ENCODE measurements at regions of chr22 and their contacts with region 1.

Region 1: DNA sequence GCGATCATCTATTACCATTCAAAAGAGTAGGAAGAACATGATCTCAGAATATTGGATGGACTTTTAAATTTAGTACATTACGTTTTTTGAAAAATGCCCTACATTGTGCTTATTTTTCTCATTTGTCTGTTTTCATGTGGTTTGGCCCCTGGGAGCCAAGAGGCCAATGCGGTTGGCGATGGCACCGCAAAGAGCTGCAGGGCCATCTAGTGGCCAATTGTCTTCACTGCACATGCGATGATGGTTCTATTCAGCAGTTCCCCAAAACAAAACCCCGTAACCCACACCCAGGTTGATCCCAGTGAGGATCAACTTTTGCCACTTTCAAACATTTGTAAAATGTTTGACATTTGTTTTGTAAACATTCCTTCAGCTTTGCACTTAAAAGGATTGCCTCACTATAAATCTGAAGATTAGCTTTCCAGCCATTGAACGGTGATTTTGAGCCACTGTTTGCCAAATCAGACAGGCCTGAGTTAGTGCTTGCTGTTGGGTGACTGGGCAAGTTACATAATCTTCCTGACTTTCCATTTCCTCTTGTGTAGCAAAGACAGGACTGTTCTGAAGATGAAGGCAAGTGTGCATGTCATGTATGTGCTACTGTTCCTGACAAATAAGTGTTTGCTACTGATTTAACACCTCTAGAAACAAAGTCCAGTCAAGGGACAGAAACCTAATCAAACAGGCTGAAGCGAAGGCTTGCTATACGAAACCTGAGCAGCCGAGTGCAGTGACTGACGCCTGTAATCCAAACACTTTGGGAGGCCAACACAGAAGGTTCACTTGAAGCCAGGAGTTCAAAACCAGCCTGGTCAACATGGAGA is 29.2 kb upstream of the XBP1 start:
- DNase-seq: peak; percentile 7
- H3K4me3 ChIP-seq: no peak overlapping the region
- CTCF ChIP-seq: peak; percentile 89

Region 2: DNA sequence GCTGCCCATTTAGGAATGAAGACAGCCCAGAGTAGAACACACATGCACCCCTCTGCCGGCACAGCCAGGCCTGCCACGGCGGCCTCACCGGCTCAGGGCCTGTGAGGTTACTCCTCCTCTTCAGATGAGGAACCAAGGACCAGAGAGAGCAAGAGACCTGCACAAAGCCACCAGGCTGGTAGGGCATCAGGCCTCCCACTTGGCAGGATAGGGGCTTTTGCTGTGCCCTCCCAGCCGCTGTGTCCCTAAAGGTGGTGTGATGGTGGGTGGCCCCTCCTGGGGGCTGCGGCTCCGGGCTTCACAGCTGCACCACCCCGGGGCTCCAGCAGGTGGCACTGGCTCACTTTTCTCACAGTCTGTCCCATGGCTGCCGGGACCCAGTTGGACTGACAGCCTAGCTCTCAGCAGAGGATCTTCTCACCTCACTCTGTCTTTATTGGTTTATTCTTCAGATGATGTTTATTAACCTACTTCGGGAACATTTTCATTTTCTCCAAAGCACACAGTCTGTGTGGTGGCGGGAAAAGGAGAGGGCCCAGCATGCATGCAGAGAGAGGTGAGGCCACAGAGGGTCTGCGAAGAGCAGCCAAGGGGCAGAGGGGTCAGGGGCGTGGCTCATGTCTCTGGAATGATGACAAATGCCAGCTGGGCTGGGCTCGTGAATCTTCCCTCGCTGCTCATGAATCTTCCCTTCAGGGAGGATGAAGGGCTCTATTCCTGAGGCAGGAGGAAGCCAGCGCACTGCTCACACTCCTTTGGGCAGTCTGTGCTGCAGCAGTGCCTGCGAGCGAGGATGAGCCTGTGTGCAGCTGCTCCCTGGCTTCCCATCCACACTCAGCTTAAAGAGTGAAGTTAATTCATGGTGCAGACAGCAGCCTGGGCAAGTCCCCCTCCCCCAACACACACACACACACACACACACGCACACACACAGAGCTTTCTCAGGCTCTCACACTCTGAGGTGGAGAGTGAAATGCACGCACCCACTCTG is 809.4 kb before region 1 on chr22:
- CTCF ChIA-PET with region 1: interaction called, 30 read pairs
- POLR2A ChIA-PET with region 1: no interaction called
- DNase-seq: no peak
- H3K4me3 ChIP-seq: peak overlapping the region; percentile 43
- CTCF ChIP-seq: peak; percentile 92

Region 3: DNA sequence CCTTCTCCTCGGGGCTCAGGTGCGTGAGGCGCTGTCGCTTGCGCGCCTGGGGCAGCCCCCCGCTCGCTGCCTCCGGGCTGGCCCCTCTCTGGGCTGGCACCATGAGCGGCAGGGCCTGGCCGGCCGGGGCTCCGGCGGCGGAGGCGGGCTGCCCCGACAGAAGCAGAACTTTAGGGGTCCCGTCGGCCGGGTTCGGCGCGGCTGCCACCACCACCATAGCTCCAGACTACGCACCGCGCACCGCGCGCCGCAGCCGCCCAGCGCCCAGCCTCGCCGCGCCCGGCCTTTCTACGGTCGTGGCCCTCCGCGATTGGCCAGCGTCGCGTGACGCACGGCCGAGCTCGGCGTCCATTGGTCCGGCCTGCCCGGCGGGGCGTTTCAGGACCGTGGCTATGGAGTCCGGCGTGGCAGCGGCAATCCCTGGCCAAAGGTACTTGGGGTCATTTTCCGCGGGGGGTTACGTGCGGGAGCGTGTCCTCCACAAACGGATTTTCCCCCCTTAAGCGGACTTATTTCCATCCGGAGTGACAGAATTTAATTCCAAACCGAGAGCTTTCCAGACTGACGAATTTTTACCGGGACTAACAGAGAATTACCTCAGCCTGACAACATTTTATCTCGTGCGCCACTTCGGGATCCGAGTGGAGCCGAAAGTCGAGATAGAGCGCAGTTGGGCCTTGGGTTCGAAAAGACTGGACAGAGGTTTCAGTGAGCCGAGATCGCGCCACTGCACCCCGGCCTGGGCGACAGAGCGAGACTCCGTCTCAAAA is 29.1 kb before region 1 on chr22 and contains the start of gene XBP1:
- CTCF ChIA-PET with region 1: interaction called, 11 read pairs
- POLR2A ChIA-PET with region 1: interaction called, 3 read pairs
- DNase-seq: peak; percentile 63
- H3K4me3 ChIP-seq: peak within 1 kb of the TSS; percentile 59
- CTCF ChIP-seq: no peak

Region 4: GRCh38 chr22:28817919-28818909 is 11.4 kb before region 1 on chr22:
- CTCF ChIA-PET with region 1: interaction called, 59 read pairs
- POLR2A ChIA-PET with region 1: no interaction called
- DNase-seq: no peak
- H3K4me3 ChIP-seq: no peak overlapping the region
- CTCF ChIP-seq: no peak

Region 5: GRCh38 chr22:29040385-29041275 is 211.1 kb after region 1 on chr22:
- CTCF ChIA-PET with region 1: interaction called, 42 read pairs
- POLR2A ChIA-PET with region 1: no interaction called
- DNase-seq: peak; percentile 74
- H3K4me3 ChIP-seq: no peak overlapping the region
- CTCF ChIP-seq: peak; percentile 82

Region 6: GRCh38 chr22:29079218-29079901 is 249.8 kb after region 1 on chr22:
- CTCF ChIA-PET with region 1: no interaction called
- POLR2A ChIA-PET with region 1: no interaction called
- DNase-seq: no peak
- H3K4me3 ChIP-seq: no peak overlapping the region
- CTCF ChIP-seq: no peak

Measured in AG04449 (cell line).